HEK293 (cell line): ENCODE measurements at regions of chr19 and their contacts with region 1.

Region 1: GRCh38 chr19:38618590-38619360 is at the start of gene EIF3K:
- H3K4me3 ChIP-seq: peak within 1 kb of the TSS; percentile 65
- H3K27ac ChIP-seq: peak within 1 kb of the TSS; percentile 94
- H3K4me1 ChIP-seq: peaks cover 16% of the 10 kb centered on the region
- CTCF ChIP-seq: no peak

Region 2: DNA sequence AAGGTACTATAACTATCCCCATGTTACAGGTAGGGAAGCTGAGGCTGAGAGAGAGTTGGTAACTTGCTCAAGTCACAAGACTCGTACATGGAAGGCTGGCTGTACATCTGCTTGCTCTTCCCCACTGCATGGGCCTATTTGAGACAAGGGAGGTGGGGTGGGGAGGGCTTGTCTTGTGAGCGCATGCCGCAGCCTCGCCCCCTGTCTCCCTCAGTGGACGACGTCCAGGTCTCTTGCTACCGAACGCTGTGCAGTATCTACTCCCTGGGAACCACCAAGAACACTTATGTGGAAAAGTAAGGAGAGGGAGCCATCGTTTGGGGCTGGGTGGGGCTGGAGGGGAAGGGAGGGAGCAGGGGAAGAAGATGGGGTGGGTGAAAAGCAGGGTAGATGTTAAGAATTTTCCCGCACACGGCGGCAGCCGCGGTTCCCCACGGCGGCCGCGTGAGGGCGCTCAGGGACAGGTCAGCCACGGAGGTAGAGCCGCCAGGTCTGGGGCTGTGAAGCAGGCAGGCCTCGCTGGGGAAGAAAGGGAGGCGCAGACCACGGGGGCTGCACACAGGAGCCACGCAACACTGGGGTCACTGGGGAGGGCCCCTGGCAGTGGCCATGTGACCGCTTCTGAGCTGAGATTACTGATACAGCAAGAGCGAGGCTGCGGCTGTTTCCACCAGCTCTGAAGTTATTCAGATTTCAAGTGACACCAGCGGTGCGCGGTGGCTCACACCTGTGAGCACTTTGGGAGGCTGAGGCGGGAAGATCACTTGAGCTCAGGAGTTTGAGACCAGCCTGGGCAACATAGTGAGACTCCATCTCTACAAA is 103.8 kb before region 1 on chr19:
- CTCF ChIA-PET with region 1: interaction called, 19 read pairs
- POLR2A ChIA-PET with region 1: interaction called, 6 read pairs
- H3K4me3 ChIP-seq: no peak overlapping the region
- H3K27ac ChIP-seq: no peak overlapping the region
- H3K4me1 ChIP-seq: no peaks in the 10 kb centered on the region
- CTCF ChIP-seq: peak; percentile 97

Region 3: DNA sequence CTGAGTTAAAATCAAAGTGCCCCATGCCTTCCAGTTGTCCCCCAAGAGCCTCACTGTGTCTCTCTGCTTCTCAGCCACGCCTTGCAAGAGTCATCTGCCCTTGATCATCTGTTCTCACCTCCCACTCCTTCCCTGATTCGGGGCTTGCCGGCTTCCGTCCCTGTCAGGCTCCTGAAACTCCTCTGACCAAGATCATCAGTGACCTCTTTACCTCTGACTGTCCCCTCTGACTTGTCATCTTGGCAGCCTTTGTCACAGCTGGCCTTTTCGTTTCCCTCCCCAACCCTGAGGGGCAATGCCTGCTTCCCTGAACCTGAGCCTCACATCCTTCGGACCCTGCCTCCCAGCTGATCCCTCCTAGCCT is 67.3 kb before region 1 on chr19:
- CTCF ChIA-PET with region 1: no interaction called
- POLR2A ChIA-PET with region 1: no interaction called
- H3K4me3 ChIP-seq: no peak overlapping the region
- H3K27ac ChIP-seq: no peak overlapping the region
- H3K4me1 ChIP-seq: peaks cover 10% of the 10 kb centered on the region
- CTCF ChIP-seq: no peak

Region 4: DNA sequence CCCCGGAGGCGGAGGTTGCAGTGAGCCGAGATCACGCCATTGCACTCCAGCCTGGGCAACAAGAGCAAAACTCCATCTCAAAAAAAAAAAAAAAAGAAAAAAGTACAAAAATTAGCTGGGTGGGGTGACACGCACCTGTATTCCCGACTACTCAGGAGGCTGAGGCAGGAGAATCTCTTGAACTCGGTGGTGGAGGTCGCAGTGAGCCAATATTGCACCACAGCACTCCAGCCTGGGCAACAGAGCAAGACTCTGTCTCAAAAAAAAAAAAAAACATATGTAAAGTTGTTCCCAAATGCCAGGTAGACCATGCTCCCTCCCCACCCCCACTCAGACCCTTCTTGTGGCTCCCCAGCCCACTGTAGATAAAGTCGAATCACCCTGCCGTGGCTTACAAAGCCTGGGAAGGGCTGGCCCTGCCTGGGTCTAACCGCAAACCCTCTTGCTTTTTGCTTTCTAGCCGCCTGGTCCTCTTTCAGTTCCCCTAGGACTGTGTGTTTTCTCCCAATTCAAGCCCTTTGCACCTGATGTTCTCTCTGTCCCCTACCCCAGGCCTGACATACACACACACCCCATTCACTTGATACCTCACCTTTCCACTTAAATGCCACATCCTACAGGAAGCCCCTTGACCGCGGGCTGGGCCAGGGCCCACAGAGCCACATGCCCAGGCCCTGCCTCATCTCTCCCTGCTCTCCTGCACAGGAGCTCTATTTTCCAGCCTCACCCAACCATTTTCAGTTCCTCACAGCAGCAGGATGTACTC is 35.4 kb before region 1 on chr19:
- CTCF ChIA-PET with region 1: interaction called, 3 read pairs
- POLR2A ChIA-PET with region 1: interaction called, 11 read pairs
- H3K4me3 ChIP-seq: no peak overlapping the region
- H3K27ac ChIP-seq: no peak overlapping the region
- H3K4me1 ChIP-seq: no peaks in the 10 kb centered on the region
- CTCF ChIP-seq: no peak

Region 5: GRCh38 chr19:38634757-38635482 is 16.1 kb after region 1 on chr19:
- CTCF ChIA-PET with region 1: interaction called, 61 read pairs
- POLR2A ChIA-PET with region 1: interaction called, 31 read pairs
- H3K4me3 ChIP-seq: no peak overlapping the region
- H3K27ac ChIP-seq: peak overlapping the region; percentile 31; the same call in 1 of the 2 replicates
- H3K4me1 ChIP-seq: no peaks in the 10 kb centered on the region; the same call in 1 of the 2 replicates
- CTCF ChIP-seq: peak; percentile 96

Region 6: GRCh38 chr19:38658462-38659306 is 39.9 kb after region 1 on chr19:
- CTCF ChIA-PET with region 1: no interaction called
- POLR2A ChIA-PET with region 1: interaction called, 10 read pairs
- H3K4me3 ChIP-seq: no peak overlapping the region
- H3K27ac ChIP-seq: peak overlapping the region; percentile 70
- H3K4me1 ChIP-seq: peaks cover 70% of the 10 kb centered on the region
- CTCF ChIP-seq: no peak

Region 7: DNA sequence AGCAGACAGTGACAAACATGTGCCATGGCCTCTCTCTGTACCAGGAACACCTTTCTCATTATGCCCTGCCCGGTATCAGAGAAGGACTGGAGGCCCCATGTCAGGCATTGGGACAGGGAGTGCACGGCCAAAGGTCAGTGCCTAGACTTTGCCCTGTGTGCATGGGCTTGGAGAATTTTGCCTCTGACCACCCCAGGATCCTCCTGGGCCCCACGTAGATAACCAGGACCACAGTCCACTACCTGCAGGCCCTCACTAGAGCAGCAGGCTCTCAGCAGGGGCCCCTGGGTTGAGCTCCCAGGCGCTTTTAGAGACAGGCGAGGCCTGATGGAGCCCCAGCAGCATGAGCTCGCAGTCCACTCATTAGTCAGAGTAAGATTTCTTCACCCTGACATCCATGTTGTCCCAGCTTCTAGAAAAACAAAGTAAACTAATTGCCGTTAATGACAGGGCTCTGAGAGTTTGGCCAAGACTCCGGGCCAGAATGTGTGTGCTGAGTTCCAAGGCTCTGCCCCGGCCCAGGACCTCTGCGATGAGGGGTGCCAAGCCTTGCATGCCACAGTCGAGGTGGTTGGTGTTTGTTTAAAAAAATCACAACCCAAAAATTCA is 82.8 kb after region 1 on chr19:
- CTCF ChIA-PET with region 1: no interaction called
- POLR2A ChIA-PET with region 1: no interaction called
- H3K4me3 ChIP-seq: no peak overlapping the region
- H3K27ac ChIP-seq: peak overlapping the region; percentile 37; the same call in 1 of the 2 replicates
- H3K4me1 ChIP-seq: no peaks in the 10 kb centered on the region
- CTCF ChIP-seq: no peak

Region 8: DNA sequence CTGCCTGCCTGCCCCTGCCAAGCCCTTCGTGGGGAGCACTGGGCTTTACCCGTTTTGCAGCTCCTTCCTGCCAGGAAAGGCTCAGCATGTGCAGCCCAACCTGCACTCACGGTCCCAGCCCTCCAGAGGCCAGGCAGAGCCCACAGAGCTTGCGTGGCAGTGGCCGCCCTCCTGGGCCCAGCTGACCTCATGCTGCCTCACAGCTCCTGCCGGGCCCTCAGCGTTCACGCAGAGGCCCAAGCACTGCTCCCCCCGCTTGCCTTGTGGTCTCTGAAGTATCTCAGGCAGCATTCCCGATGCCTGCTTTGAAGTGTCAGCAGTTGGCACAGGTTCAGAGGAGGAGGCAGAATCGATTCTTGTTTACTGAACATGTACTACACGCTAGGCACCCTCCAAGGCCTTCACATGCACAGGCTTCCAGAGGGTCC is 93.0 kb after region 1 on chr19:
- CTCF ChIA-PET with region 1: no interaction called
- POLR2A ChIA-PET with region 1: no interaction called
- H3K4me3 ChIP-seq: no peak overlapping the region
- H3K27ac ChIP-seq: no peak overlapping the region
- H3K4me1 ChIP-seq: no peaks in the 10 kb centered on the region
- CTCF ChIP-seq: no peak

Region 9: GRCh38 chr19:38849860-38850435 is 231.2 kb after region 1 on chr19 and contains the start of gene HNRNPL:
- CTCF ChIA-PET with region 1: no interaction called
- POLR2A ChIA-PET with region 1: interaction called, 11 read pairs
- H3K4me3 ChIP-seq: peak within 1 kb of the TSS; percentile 57
- H3K27ac ChIP-seq: peak within 1 kb of the TSS; percentile 100
- H3K4me1 ChIP-seq: peaks cover 32% of the 10 kb centered on the region
- CTCF ChIP-seq: peak; percentile 100